ENCODE measurements at regions of chr3 and their contacts with region 1.

Region 1: GRCh38 chr3:42502429-42503250 is at the start of gene VIPR1:
- DNase-seq: peak; percentile 91
- ATAC-seq: peak; percentile 99
- H3K4me3 Mint-ChIP-seq: peak within 1 kb of the TSS; percentile 91
- H3K27ac Mint-ChIP-seq: peak within 1 kb of the TSS; percentile 70
- H3K4me1 Mint-ChIP-seq: peaks cover 22% of the 10 kb centered on the region
- H3K27me3 Mint-ChIP-seq: peaks cover 24% of the 10 kb centered on the region
- CTCF ChIP-seq: no peak
- total RNA-seq, gene VIPR1: 3.2 and 3.6 TPM in 2 replicates

Region 2: DNA sequence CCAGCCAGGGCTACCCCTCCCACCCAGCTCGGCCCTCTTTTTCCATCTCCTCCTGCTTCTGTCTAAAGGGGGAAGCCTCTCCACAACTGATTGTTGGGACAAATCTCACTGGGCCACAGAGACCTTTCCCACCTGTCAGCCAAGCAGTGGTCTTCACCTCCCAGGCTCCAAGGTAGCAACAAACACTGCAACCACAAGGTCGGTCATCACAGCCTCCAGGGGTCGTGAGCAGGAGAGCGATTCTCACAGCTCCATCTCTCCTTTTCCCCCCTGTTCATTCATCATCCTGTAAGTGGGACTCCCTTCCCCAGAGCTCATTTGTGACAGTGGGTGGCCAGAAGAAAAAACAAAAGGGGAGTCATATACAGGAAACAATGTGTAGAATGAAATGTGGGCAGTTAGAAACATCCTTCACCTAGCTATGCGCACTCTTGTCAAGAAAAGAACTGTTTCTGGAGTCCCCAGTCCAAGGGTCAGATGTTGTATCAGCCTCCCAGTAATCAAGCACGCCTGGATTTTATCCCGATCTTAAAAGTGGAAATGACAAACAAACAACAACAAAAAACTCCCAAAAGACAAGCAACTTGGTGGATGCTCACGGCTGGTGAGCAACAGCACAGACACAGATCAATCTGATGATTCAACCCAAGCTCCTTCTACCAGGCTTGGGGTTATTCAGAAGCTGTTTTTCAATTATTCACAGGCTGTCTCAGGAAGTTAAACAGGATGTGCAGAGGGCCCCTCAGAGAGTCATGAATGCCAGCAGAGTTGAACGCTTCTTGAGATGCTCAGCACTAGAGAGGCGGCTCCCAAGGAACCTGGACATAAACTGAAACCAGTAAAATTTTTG is 114.6 kb before region 1 on chr3:
- CTCF ChIA-PET with region 1: no interaction called
- POLR2A ChIA-PET with region 1: no interaction called
- intact Hi-C with region 1: no loop called
- DNase-seq: no peak
- ATAC-seq: no peak
- H3K4me3 Mint-ChIP-seq: no peak overlapping the region
- H3K27ac Mint-ChIP-seq: no peak overlapping the region
- H3K4me1 Mint-ChIP-seq: no peaks in the 10 kb centered on the region
- H3K27me3 Mint-ChIP-seq: peaks cover 8% of the 10 kb centered on the region
- CTCF ChIP-seq: no peak

Region 3: GRCh38 chr3:42490243-42490642 is 12.4 kb before region 1 on chr3:
- CTCF ChIA-PET with region 1: interaction called, 18 read pairs
- POLR2A ChIA-PET with region 1: interaction called, 20 read pairs
- intact Hi-C with region 1: loop called (anchors 1 kb)
- DNase-seq: peak; percentile 37
- ATAC-seq: peak; percentile 98
- H3K4me3 Mint-ChIP-seq: peak overlapping the region; percentile 64
- H3K27ac Mint-ChIP-seq: peak overlapping the region; percentile 83
- H3K4me1 Mint-ChIP-seq: peaks cover 50% of the 10 kb centered on the region
- H3K27me3 Mint-ChIP-seq: no peaks in the 10 kb centered on the region
- CTCF ChIP-seq: no peak

Region 4: GRCh38 chr3:42547401-42547945 is 44.8 kb after region 1 on chr3:
- CTCF ChIA-PET with region 1: interaction called, 8 read pairs
- POLR2A ChIA-PET with region 1: no interaction called
- intact Hi-C with region 1: loop called (anchors 1 kb)
- DNase-seq: peak; percentile 55
- ATAC-seq: peak; percentile 62
- H3K4me3 Mint-ChIP-seq: no peak overlapping the region
- H3K27ac Mint-ChIP-seq: no peak overlapping the region
- H3K4me1 Mint-ChIP-seq: no peaks in the 10 kb centered on the region
- H3K27me3 Mint-ChIP-seq: no peaks in the 10 kb centered on the region
- CTCF ChIP-seq: peak; percentile 87

Region 5: GRCh38 chr3:42590989-42591756 is 88.5 kb after region 1 on chr3:
- CTCF ChIA-PET with region 1: no interaction called
- POLR2A ChIA-PET with region 1: interaction called, 14 read pairs
- intact Hi-C with region 1: no loop called
- DNase-seq: no peak
- ATAC-seq: peak; percentile 26
- H3K4me3 Mint-ChIP-seq: peak overlapping the region; percentile 93
- H3K27ac Mint-ChIP-seq: peak overlapping the region; percentile 95
- H3K4me1 Mint-ChIP-seq: peaks cover 26% of the 10 kb centered on the region
- H3K27me3 Mint-ChIP-seq: no peaks in the 10 kb centered on the region
- CTCF ChIP-seq: no peak

Region 6: DNA sequence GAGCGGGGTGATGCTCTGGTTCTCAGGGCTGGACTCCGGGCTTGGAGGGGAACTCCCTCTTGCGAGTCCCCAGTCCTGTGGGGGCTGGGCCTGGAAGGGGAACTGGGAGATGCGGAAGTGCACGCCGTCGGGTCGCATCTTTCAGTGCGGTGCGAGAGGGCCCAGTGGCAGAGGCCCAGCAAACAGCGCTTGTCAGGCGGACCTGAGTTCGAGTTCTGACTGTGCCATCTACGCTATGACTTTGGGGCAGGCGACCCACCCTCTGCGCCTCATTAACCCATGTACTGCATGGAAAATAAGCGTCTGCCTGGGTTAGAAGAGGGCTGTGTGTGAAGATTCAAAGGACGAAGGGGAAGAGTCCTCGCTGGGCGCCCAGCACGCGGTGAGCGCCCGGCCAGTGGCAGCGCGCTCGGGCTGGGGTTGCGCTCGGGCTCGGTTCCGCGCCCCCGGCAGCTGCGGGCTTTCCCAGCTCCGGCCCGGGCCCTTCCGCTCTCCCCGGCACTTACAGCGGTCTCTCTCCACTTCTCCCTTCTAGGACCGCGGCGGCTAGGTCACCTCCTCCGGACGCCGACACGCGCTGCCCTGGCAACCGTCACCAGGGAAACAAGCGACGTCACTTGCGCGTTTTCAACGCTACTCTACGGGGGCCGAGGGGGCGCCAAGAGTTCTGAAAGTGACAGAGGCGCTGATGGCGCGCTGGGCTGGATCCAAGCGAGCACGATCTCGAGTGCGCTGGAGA is 270.2 kb after region 1 on chr3 and contains the start of gene CCDC13:
- CTCF ChIA-PET with region 1: no interaction called
- POLR2A ChIA-PET with region 1: no interaction called
- intact Hi-C with region 1: loop called (anchors 1 kb)
- DNase-seq: peak; percentile 97
- ATAC-seq: peak; percentile 90
- H3K4me3 Mint-ChIP-seq: peak within 1 kb of the TSS; percentile 90
- H3K27ac Mint-ChIP-seq: peak within 1 kb of the TSS; percentile 89
- H3K4me1 Mint-ChIP-seq: peaks cover 13% of the 10 kb centered on the region
- H3K27me3 Mint-ChIP-seq: no peaks in the 10 kb centered on the region
- CTCF ChIP-seq: no peak
- total RNA-seq, gene CCDC13: 1.7 and 1.9 TPM in 2 replicates